ENCODE measurements at regions of chr17 and their contacts with region 1.

Region 1: GRCh38 chr17:75131280-75132017 is at the start of gene NT5C:
- DNase-seq: no peak
- H3K4me3 ChIP-seq: peak within 1 kb of the TSS; percentile 73
- CTCF ChIP-seq: peak; percentile 81

Region 2: DNA sequence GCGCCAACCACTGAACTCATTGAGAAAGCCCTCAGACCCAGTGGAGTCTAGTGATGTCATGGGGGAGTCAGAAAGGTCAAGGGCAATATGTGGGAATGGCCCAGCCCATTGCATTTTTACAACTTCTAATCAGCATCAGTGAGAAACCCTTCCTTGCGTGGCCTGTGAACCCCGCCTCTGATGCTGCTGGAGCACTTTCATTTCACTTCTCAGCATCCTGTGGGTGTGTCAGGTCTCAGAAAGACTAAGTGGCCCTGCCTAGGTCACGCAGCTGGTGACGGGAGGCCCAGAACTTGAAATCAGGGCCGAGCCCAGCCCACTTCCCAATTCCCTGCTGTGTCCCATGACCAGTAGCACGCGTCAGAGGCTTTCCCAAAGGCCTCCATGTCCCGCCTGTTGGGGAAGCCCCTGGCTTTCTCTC is 851.3 kb before region 1 on chr17:
- CTCF ChIA-PET with region 1: no interaction called
- POLR2A ChIA-PET with region 1: no interaction called
- DNase-seq: no peak
- H3K4me3 ChIP-seq: no peak overlapping the region
- CTCF ChIP-seq: no peak

Region 3: DNA sequence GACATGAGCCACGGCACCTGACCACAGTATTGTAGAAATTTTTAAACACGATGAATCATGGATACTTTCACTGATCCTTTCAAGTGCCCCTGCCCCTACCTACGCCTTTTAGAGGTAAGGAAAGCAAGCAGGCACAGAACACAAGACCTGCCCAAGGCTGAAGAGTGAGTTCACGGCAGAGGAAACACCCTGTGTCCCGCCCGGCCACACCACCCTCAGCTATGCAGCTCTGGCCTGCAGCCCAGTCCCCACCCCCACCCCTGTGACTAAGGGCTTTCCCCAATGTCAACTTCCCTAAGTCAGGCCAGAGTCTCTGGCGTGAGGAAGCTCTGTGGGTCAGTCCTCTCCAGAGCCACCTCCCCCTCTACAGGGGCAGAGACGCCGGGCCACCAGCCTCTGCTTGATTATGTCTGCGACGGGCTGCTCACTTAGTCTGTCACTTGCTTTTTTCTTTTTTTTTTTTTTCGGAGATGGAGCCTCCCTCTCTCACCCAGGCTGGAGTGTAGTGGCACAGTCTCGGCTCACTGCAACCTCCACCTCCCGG is 35.3 kb before region 1 on chr17:
- CTCF ChIA-PET with region 1: no interaction called
- POLR2A ChIA-PET with region 1: no interaction called
- DNase-seq: no peak
- H3K4me3 ChIP-seq: no peak overlapping the region
- CTCF ChIP-seq: no peak

Region 4: GRCh38 chr17:75144816-75145512 is 13.5 kb after region 1 on chr17:
- CTCF ChIA-PET with region 1: interaction called, 37 read pairs
- POLR2A ChIA-PET with region 1: no interaction called
- DNase-seq: no peak
- H3K4me3 ChIP-seq: no peak overlapping the region
- CTCF ChIP-seq: no peak

Region 5: GRCh38 chr17:75151930-75152329 is 20.5 kb after region 1 on chr17:
- CTCF ChIA-PET with region 1: interaction called, 37 read pairs
- POLR2A ChIA-PET with region 1: no interaction called
- DNase-seq: no peak
- H3K4me3 ChIP-seq: no peak overlapping the region; the same call in 1 of the 2 replicates
- CTCF ChIP-seq: no peak

Measured in AG04449 (cell line).